ENCODE measurements at regions of chr2 and their contacts with region 1.

Region 1: DNA sequence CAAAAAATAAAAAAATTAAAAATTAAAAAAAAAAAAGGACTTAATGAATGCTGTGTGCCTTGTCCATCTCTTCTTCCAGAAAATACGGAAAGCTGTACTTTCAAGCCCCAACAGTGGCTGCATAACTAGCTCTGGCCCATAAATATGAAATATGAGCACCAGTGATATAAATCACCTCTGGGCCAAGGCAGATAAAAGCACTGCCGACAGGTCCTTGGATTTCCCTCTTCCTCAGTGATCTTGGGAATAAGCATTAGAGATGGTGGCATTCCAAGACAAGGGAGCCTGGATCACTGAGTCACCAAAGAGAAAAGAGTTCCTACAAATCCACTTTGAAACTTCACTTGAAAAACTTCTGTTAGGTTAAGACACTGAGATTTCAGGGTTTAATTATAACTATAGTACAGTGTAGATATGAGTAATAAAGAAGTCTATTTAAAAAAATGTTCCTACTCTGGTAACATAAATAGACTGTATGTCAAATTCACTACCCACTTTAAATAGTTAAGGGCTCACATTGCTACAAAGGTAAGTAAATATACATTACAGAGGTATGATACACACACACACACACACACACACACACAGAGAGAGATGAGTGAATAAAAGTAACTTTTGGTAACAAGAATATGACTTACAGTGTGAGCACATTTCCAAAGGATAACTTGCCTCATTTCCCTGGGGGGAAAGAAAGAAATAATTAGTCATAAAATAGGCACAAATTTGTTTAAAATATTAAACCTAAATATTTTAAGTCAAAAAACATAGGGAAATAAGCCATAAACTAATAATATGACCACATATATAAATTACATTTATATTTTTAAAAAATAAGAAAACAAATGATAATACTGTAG is 35.6 kb downstream of the PPP3R1 start:
- DNase-seq: no peak
- H3K4me3 ChIP-seq: no peak overlapping the region
- H3K27ac ChIP-seq: no peak overlapping the region
- H3K4me1 ChIP-seq: peaks cover 15% of the 10 kb centered on the region
- H3K27me3 ChIP-seq: no peaks in the 10 kb centered on the region
- CTCF ChIP-seq: no peak

Region 2: GRCh38 chr2:67854798-67855197 is 361.9 kb before region 1 on chr2:
- CTCF ChIA-PET with region 1: no interaction called
- POLR2A ChIA-PET with region 1: interaction called, 14 read pairs
- intact Hi-C with region 1: no loop called
- DNase-seq: no peak
- H3K4me3 ChIP-seq: no peak overlapping the region
- H3K27ac ChIP-seq: no peak overlapping the region
- H3K4me1 ChIP-seq: no peaks in the 10 kb centered on the region
- H3K27me3 ChIP-seq: peaks cover 5% of the 10 kb centered on the region; the same call in 1 of the 2 replicates
- CTCF ChIP-seq: no peak

Measured in PC-9 (cell line).